Sciatic nerve (tissue), 2 donors: ENCODE measurements at regions of chr7 and their contacts with region 1.

Region 1: DNA sequence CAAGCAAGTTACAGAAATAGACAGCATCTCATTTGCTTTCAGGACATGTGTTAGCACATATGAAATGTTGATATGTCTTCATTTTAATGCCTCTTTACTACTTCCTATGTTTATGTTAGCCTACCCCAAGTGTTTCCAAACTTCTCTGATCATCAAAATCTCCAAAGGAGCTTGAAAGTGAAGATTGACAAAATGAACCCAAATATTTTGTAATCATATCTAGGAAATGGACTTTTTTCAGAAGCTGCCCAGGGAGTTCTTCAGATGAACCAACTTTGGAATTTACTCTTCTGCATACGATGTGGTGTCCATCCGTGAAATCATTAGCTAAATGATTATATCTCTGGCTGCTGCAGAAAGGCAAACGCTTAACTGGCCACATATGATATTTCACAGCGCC is 101.2 kb upstream of the AOAH start:
- DNase-seq: no peak
- ATAC-seq: no peak

Region 2: GRCh38 chr7:36758879-36759278 is 66.6 kb before region 1 on chr7:
- intact Hi-C with region 1: loop called (anchors 2 kb)
- DNase-seq: no peak
- ATAC-seq: peak; percentile 55